Right cardiac atrium (tissue), 5 donors: ENCODE measurements at regions of chr2 and their contacts with region 1.

Region 1: GRCh38 chr2:33482518-33482917 is 6.1 kb downstream of the RASGRP3 start:
- DNase-seq: no peak
- ATAC-seq: peak; percentile 1 to 40
- H3K4me3 ChIP-seq: no peak overlapping the region
- H3K27ac ChIP-seq: peak overlapping the region; percentile 86
- H3K4me1 ChIP-seq: peaks cover 5% of the 10 kb centered on the region
- H3K27me3 ChIP-seq: no peaks in the 10 kb centered on the region

Region 2: GRCh38 chr2:33116799-33117198 is 365.7 kb before region 1 on chr2:
- intact Hi-C with region 1: no loop called
- DNase-seq: no peak
- ATAC-seq: no peak
- H3K4me3 ChIP-seq: no peak overlapping the region
- H3K27ac ChIP-seq: no peak overlapping the region
- H3K4me1 ChIP-seq: peaks cover 4% of the 10 kb centered on the region
- H3K27me3 ChIP-seq: no peaks in the 10 kb centered on the region

Region 3: GRCh38 chr2:33210626-33211025 is 271.9 kb before region 1 on chr2:
- intact Hi-C with region 1: no loop called
- DNase-seq: peak; percentile 44 to 62 (median 52)
- ATAC-seq: peak; percentile 72 to 86
- H3K4me3 ChIP-seq: no peak overlapping the region
- H3K27ac ChIP-seq: peak overlapping the region; percentile 28
- H3K4me1 ChIP-seq: peaks cover 5% of the 10 kb centered on the region
- H3K27me3 ChIP-seq: no peaks in the 10 kb centered on the region

Region 4: GRCh38 chr2:33555681-33556080 is 73.2 kb after region 1 on chr2:
- intact Hi-C with region 1: loop called in 1 of 4 experiments (anchors 2 kb)
- DNase-seq: no peak
- ATAC-seq: no peak
- H3K4me3 ChIP-seq: no peak overlapping the region
- H3K27ac ChIP-seq: no peak overlapping the region
- H3K4me1 ChIP-seq: peaks cover 4% of the 10 kb centered on the region
- H3K27me3 ChIP-seq: no peaks in the 10 kb centered on the region

Region 5: DNA sequence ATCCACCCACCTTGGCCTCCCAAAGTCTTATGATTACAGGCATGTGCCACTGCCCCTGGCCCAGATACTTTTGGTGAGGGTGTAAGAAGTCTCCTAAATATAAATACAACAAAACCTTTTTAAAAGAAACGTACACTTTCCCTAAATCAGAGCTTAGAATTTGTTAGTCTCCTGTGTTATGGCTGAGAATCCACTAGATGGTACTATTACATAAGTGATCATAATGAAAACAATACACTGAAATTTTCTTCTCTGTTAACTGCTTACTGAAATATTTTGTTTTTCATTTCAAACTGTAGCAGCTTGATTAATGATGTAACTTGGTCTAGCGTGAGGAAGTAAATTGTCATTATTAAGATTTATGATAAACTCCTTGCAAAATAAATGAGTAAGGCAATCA is 191.4 kb after region 1 on chr2:
- intact Hi-C with region 1: no loop called
- DNase-seq: no peak
- ATAC-seq: no peak
- H3K4me3 ChIP-seq: no peak overlapping the region
- H3K27ac ChIP-seq: no peak overlapping the region
- H3K4me1 ChIP-seq: no peaks in the 10 kb centered on the region
- H3K27me3 ChIP-seq: no peaks in the 10 kb centered on the region

Region 6: DNA sequence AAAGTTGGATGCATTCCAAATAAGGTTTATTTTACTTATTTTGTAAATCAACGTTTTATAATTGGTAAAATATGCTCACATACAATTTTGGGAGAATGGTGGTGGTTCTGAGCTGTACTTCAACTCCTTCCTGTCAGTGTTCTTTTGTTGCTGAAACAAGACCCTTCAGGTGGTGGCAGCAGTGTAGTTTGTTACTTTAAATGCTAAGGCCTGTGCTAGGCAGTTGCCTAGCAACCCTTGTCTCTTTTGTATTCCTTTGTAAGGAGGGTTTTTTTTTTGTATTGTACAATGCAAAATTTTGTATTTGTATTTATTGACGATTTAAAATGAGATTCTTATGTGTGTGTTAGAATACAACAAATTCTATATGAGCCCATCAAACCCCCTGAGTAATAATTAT is 282.6 kb after region 1 on chr2:
- intact Hi-C with region 1: no loop called
- DNase-seq: no peak
- ATAC-seq: no peak
- H3K4me3 ChIP-seq: no peak overlapping the region
- H3K27ac ChIP-seq: no peak overlapping the region
- H3K4me1 ChIP-seq: no peaks in the 10 kb centered on the region
- H3K27me3 ChIP-seq: no peaks in the 10 kb centered on the region